ENCODE measurements at regions of chr20 and their contacts with region 1.

Region 1: DNA sequence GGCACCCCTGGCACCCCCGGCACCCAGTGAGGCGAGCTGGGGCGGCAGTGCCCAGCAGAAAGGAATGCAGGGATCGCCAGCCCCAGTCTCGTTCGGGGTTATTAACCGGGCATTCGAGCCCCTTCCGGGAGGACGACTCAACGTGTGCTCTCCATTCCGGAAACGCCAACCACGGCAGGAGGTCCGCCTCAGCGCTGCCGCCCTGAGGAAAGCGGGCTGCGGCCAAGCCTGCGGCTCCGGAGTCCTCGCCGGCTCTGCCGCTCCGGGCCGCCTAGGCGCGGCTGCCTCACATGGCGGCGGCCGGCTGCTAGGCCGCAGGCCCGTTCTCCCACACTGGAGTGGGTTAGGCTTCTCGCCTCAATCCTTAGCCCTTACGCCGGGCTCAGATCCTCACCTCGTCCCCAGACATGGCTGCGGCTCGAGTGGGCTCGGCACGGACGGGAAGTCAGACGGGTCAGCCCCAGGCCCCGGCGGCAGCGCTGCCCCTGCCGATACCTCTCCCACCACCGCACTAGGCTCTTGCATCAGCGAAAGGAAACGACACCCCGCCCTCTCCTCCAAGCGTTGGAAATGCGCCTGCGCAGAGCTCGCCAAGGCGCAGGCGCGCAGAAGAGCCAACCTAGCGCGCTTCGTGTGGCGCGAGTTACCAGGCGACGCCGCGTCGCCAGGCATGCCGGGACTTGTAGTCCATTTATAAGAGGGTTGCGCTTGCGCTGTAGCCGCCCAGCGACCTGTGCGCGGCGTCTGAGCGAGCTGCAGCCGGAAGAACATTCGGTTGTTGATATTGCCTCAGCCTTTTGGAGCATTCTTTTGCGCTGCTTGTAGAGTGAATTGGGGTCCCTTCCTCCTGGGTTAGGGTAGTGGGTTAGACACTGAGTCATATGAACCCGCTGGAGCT is at the start of gene EIF2S2:
- DNase-seq: peak; percentile 93
- ATAC-seq: peak; percentile 92
- H3K4me3 Mint-ChIP-seq: peak within 1 kb of the TSS; percentile 93
- H3K27ac Mint-ChIP-seq: peak within 1 kb of the TSS; percentile 99
- H3K4me1 Mint-ChIP-seq: peaks cover 33% of the 10 kb centered on the region
- H3K27me3 Mint-ChIP-seq: no peaks in the 10 kb centered on the region
- total RNA-seq, gene EIF2S2: 82.4 to 85.0 TPM

Region 2: DNA sequence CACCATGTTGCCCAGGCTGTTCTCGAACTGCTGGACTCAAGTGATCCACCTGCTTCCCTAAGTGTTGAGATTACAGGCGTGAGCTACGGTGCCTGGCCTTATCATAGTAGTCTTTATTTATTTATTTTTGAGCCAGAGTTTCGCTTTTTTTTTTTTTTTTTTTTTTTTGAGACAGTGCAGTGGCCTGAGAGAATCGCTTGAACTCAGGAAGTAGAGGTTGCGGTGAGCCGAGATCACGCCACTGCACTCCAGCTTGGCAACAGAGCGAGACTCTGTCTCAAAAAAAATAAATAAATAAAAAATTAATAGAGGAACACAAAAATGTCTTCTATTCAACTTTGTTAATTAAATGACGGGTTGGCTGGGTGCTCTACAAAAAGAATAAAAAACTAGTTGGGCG is 1279.3 kb before region 1 on chr20:
- POLR2A ChIA-PET with region 1: interaction called, 11 read pairs
- DNase-seq: peak; percentile 54
- ATAC-seq: peak; percentile 54
- H3K4me3 Mint-ChIP-seq: peak overlapping the region; percentile 75
- H3K27ac Mint-ChIP-seq: peak overlapping the region; percentile 51
- H3K4me1 Mint-ChIP-seq: peaks cover 38% of the 10 kb centered on the region
- H3K27me3 Mint-ChIP-seq: no peaks in the 10 kb centered on the region

Region 3: DNA sequence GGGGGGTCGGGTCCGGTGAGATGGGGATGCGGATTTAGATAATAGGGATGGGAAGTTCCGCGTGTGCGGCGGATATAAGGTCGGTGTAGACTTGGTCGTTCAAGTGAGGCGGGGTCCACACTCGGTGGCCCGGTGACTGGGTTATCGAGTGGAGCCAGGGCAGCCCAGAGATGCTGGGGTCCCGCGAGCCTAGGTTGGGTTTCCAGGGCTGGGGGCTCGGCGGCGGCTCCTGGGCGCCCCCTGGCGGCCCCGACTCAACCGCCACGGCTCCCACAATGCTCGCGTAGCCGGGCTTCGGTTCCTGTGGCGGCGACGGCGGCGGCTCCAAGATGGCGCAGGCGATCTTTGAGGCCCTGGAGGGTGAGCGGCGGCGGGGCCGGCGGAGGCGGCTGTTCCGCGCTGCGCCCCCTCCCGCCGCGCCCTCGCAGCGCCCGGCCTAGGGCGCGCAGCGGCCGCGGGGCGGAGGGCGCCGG is 380.2 kb before region 1 on chr20 and contains the start of gene ZNF341:
- POLR2A ChIA-PET with region 1: interaction called, 13 read pairs
- DNase-seq: no peak
- ATAC-seq: peak; percentile 86
- H3K4me3 Mint-ChIP-seq: peak within 1 kb of the TSS; percentile 87
- H3K27ac Mint-ChIP-seq: peak within 1 kb of the TSS; percentile 90
- H3K4me1 Mint-ChIP-seq: peaks cover 18% of the 10 kb centered on the region
- H3K27me3 Mint-ChIP-seq: no peaks in the 10 kb centered on the region
- total RNA-seq, gene ZNF341: 5.1 to 5.7 TPM

Region 4: DNA sequence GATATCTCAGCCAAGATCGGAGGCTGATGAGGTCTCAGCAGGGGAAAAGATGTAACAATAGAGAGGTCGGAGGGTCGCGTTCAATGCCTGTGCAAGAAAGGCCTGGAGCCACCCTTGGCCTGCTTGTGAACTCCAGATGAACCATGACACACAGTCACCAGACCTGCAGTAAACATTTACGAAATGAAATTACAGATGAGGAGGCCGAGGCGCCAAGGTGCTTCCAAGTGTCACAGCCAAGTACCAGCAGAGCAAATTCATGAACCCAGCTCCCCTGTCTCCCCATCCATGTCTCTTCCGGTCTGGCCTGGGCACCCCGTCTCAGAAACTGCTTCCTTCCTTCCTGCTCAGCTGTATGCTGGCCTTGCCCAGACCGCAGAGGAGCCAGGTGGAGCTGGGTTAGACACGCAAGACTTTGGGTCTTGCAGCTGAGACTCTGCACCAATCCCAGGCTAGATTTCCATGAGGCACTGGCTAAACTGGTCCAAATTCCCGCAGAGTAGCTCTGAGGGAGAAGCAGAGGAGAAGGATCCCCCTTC is 252.7 kb before region 1 on chr20:
- POLR2A ChIA-PET with region 1: interaction called, 23 read pairs
- DNase-seq: peak; percentile 69
- ATAC-seq: peak; percentile 82
- H3K4me3 Mint-ChIP-seq: peak overlapping the region; percentile 73
- H3K27ac Mint-ChIP-seq: peak overlapping the region; percentile 95
- H3K4me1 Mint-ChIP-seq: peaks cover 43% of the 10 kb centered on the region
- H3K27me3 Mint-ChIP-seq: no peaks in the 10 kb centered on the region

Region 5: DNA sequence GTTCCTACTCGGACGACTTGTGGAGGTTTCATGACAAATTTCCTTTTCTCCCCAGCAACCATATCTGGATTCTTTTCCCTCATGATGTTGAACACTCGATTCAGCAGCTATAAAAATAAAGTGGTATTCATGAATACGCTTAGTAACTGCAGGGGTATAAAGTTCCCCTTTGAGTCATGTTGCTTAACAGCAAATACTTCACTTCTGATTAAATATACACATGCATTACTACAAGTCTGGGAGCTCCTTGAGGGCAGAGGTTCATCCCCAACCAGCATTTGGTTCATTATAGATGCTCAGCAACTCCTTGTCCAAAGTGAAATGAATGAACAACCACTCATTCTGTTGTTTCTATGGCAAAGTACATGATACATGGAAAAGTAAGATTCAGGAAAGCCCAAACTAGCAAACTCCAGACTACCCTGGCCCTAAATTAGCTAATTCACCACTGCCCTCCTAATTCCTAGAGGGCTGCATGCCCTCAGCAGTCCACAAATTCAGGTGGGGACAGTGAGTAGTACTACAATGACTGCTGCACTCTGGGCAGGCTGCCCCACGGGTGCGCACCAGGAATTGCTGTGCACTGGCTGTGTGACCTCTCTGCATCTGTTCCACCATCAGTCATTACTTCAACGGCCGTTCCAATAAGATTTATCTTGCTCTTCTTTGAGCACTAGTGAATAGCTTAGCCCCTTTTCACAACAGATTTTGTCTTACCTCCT is 15.1 kb before region 1 on chr20:
- POLR2A ChIA-PET with region 1: interaction called, 13 read pairs
- DNase-seq: no peak
- ATAC-seq: no peak
- H3K4me3 Mint-ChIP-seq: no peak overlapping the region
- H3K27ac Mint-ChIP-seq: peak overlapping the region; percentile 30
- H3K4me1 Mint-ChIP-seq: peaks cover 13% of the 10 kb centered on the region
- H3K27me3 Mint-ChIP-seq: no peaks in the 10 kb centered on the region

Region 6: DNA sequence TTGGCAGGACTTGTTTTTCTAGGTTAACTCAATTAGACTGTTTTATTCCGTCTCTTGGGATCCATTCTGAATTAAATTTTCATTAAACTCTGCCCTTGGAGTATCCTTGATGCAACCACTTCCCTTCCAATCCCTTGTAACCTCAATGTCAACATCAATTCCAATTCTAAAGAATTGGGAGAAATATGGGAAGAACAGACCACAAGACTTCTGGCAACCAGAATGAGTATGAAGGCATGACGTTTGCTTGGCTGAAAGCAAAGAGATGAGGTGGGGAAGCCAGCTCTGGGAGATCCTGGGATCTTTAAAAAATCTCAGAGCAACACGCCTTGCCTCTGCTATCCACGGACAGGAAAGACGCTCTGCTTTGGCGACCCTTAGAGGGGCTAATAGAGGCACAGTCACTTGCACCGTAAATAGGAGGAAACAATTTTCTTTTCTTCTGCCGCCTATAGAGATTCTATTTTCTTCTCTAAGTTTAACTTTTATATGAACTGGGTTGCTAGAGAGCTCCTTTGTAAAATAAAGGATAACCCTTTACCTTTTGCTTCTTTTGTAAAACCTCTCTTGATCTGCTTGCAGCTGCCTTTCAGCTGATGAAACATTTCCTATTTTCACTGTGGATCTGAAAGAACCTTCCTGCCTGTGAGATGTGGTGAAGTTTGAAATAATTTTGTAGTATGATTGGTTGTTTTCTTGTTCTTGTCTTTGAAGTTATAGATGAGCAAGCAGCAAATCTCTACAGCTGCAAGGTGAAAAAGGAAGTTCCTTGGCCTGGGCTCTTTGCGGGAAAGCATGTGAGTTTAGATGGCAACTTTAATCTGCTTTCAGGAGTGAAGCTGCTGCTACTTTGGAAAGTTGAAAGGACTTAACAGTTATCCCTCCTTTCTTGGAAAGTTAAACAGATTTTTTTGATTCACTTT is 129.0 kb after region 1 on chr20 and contains the start of gene ASIP:
- POLR2A ChIA-PET with region 1: no interaction called
- DNase-seq: no peak
- ATAC-seq: no peak
- H3K4me3 Mint-ChIP-seq: peak within 1 kb of the TSS; percentile 39
- H3K27ac Mint-ChIP-seq: no peak within 1 kb of the TSS
- H3K4me1 Mint-ChIP-seq: peaks cover 11% of the 10 kb centered on the region
- H3K27me3 Mint-ChIP-seq: peaks cover 20% of the 10 kb centered on the region
- total RNA-seq, gene ASIP: not detected

Region 7: DNA sequence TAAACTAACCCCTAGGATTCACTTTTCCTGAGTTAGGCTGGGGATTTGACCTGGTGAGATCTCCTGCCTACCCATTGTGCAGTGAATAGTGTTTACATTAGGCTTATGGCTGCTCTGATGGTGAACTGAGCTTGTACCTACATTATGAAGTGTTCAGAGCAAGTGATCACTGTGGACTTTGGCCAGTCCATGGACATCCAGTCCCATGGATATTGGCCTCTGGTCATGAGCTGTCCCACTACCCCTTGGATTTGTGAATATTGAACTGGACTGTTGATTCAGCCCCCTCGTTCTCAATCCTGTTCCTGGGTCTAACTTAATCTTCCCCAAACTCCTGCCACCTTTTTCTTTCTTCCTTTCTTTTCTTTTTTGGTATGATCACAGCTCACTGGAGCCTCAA is 143.0 kb after region 1 on chr20:
- POLR2A ChIA-PET with region 1: no interaction called
- DNase-seq: no peak
- ATAC-seq: no peak
- H3K4me3 Mint-ChIP-seq: no peak overlapping the region
- H3K27ac Mint-ChIP-seq: no peak overlapping the region
- H3K4me1 Mint-ChIP-seq: peaks cover under 1% of the 10 kb centered on the region
- H3K27me3 Mint-ChIP-seq: no peaks in the 10 kb centered on the region